ENCODE measurements at regions of chr4 and their contacts with region 1.

Region 1: DNA sequence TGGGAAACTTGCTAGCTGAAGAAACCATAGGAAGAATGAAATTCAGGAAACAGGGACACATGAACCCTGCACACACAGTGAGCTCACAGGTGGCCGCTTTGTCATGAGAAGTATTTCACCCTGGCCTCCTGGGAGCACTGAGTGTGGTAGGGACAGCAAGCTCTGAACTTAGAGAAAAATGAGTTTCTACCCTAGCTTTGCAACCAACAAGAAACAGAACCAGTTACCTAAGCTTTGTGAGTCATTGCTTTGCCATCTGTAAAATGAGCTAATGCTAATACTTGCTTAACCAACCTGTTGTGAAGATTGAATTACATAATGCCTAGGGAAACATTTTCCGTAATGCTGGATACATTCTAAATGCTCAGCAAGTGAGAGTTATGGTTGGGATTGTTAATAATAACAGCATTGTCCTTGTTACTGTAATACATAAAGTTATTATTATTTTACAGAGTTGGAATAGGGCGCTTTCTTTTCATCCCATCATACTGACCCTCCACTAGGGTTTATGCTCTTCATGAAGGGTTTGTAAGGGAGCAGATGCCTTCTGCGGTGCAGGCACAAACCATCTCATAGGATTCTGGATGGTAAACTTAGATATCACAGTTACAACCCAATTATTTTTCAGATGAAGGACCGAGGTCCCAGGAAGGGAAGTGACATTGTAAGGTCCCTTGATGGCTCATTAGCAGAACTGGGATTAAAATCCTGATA is 206.8 kb upstream of the HS3ST1 start:
- DNase-seq: peak; percentile 88
- ATAC-seq: peak; percentile 41
- H3K4me3 ChIP-seq: peak overlapping the region in 1 of 2 experiments; percentile 3; a peak in 2 of 4 replicates
- H3K27ac ChIP-seq: peak overlapping the region; percentile 94
- H3K4me1 ChIP-seq: peaks cover 68 to 75% of the 10 kb centered on the region in 2 experiments
- H3K27me3 ChIP-seq: no peaks in the 10 kb centered on the region
- CTCF ChIP-seq: no peak
- POLR2A ChIP-seq: no peak
- RAD21 ChIP-seq: no peak

Region 2: GRCh38 chr4:11428899-11429698 is 206.4 kb before region 1 on chr4:
- CTCF ChIA-PET with region 1: interaction called, 4 read pairs
- POLR2A ChIA-PET with region 1: interaction called, 10 read pairs
- RAD21 ChIA-PET with region 1: no interaction called
- intact Hi-C with region 1: loop called (anchors 2 kb)
- DNase-seq: peak; percentile 94
- ATAC-seq: peak; percentile 91
- H3K4me3 ChIP-seq: peak overlapping the region; percentile 91 to 94
- H3K27ac ChIP-seq: peak overlapping the region; percentile 90
- H3K4me1 ChIP-seq: peaks cover 46 to 73% of the 10 kb centered on the region in 2 experiments
- H3K27me3 ChIP-seq: no peaks in the 10 kb centered on the region
- CTCF ChIP-seq: peak in 2 of 3 experiments; percentile 65 to 80; a peak in 4 of 6 replicates
- POLR2A ChIP-seq: peak; percentile 54
- RAD21 ChIP-seq: no peak

Region 3: DNA sequence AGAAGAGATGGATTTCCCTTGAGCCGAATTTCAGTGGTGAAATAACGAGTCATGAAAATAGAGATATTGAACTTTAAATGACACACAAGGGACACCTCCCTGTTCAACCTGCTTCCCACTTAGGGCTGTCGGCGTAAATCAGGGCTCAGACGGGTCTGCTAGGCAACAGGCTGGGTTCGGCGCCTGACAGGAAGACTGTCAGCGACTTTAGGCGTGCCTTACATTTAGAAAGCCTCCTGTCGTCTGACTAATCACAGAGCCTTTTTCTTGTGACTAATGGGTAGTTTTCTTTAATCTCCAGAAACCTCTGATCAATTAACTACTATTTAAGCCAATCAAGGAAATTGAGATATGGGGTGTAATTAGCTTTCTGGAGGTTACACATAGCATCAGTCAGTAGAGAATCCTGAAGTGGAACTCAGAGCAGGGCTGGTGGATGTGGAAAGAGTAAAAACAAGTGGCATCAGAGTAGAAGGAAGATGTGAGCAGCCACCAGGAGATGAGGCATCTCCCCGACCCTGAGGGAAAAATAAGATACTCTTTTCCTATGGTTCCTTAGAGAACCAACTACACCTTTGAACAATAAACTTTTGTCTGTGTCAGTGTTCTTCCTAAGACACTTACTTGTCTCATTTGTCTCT is 120.6 kb before region 1 on chr4:
- CTCF ChIA-PET with region 1: no interaction called
- POLR2A ChIA-PET with region 1: interaction called, 16 read pairs
- RAD21 ChIA-PET with region 1: no interaction called
- intact Hi-C with region 1: no loop called
- DNase-seq: peak; percentile 69
- ATAC-seq: peak; percentile 88
- H3K4me3 ChIP-seq: peak overlapping the region in 1 of 2 experiments; percentile 2; a peak in 1 of 4 replicates
- H3K27ac ChIP-seq: peak overlapping the region; percentile 87
- H3K4me1 ChIP-seq: peaks cover 42 to 59% of the 10 kb centered on the region in 2 experiments
- H3K27me3 ChIP-seq: no peaks in the 10 kb centered on the region
- CTCF ChIP-seq: no peak
- POLR2A ChIP-seq: no peak
- RAD21 ChIP-seq: no peak

Region 4: DNA sequence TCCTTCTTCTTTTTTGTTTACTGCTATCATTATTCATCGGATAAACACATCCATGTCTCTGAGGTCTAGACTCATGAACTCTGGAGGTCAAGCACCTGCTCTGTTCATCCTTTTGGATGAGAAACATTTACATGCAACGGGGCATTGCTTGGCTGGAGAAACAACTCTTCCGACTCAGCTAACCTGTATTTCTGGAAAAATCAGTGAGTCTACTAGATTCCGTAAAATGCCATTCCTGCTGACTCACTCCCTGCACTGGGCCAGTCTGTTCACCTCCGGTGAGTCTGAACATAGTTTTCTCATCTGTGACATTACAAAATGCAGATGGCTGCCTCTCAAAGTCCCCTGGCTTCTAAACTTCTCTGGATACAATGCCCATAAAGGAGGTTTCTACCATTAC is 21.1 kb before region 1 on chr4:
- CTCF ChIA-PET with region 1: no interaction called
- POLR2A ChIA-PET with region 1: interaction called, 14 read pairs
- RAD21 ChIA-PET with region 1: no interaction called
- intact Hi-C with region 1: no loop called
- DNase-seq: peak; percentile 90
- ATAC-seq: peak; percentile 86
- H3K4me3 ChIP-seq: peak overlapping the region in 1 of 2 experiments; percentile 37; a peak in 2 of 4 replicates
- H3K27ac ChIP-seq: peak overlapping the region; percentile 98
- H3K4me1 ChIP-seq: peaks cover 76 to 92% of the 10 kb centered on the region in 2 experiments
- H3K27me3 ChIP-seq: no peaks in the 10 kb centered on the region
- CTCF ChIP-seq: no peak
- POLR2A ChIP-seq: no peak
- RAD21 ChIP-seq: no peak

Region 5: GRCh38 chr4:11650801-11651596 is 15.5 kb after region 1 on chr4:
- CTCF ChIA-PET with region 1: no interaction called
- POLR2A ChIA-PET with region 1: interaction called, 22 read pairs
- RAD21 ChIA-PET with region 1: no interaction called
- intact Hi-C with region 1: no loop called
- DNase-seq: peak; percentile 96
- ATAC-seq: peak; percentile 87
- H3K4me3 ChIP-seq: peak overlapping the region; percentile 16 to 38
- H3K27ac ChIP-seq: peak overlapping the region; percentile 95
- H3K4me1 ChIP-seq: peaks cover 30 to 77% of the 10 kb centered on the region in 2 experiments
- H3K27me3 ChIP-seq: no peaks in the 10 kb centered on the region
- CTCF ChIP-seq: no peak
- POLR2A ChIP-seq: no peak
- RAD21 ChIP-seq: peak; percentile 61

Region 6: GRCh38 chr4:11704136-11704830 is 68.8 kb after region 1 on chr4:
- CTCF ChIA-PET with region 1: no interaction called
- POLR2A ChIA-PET with region 1: interaction called, 33 read pairs
- RAD21 ChIA-PET with region 1: no interaction called
- intact Hi-C with region 1: loop called (anchors 2 kb)
- DNase-seq: no peak
- ATAC-seq: no peak
- H3K4me3 ChIP-seq: no peak overlapping the region
- H3K27ac ChIP-seq: peak overlapping the region; percentile 28
- H3K4me1 ChIP-seq: peaks cover 32 to 70% of the 10 kb centered on the region in 2 experiments
- H3K27me3 ChIP-seq: no peaks in the 10 kb centered on the region
- CTCF ChIP-seq: no peak
- POLR2A ChIP-seq: no peak
- RAD21 ChIP-seq: no peak